OCI-LY7 (cell line): ENCODE measurements at regions of chr12 and their contacts with region 1.

Region 1: GRCh38 chr12:55817346-55818139 is at the starts of genes ORMDL2 and SARNP:
- DNase-seq: peak; percentile 100
- H3K4me3 ChIP-seq: peak within 1 kb of the TSS; percentile 97
- H3K27ac ChIP-seq: peak within 1 kb of the TSS; percentile 55
- H3K4me1 ChIP-seq: peaks cover 32% of the 10 kb centered on the region
- CTCF ChIP-seq: no peak
- total RNA-seq, gene ORMDL2: 13.4 and 20.0 TPM in 2 replicates
- total RNA-seq, gene SARNP: 86.1 and 161 TPM in 2 replicates

Region 2: DNA sequence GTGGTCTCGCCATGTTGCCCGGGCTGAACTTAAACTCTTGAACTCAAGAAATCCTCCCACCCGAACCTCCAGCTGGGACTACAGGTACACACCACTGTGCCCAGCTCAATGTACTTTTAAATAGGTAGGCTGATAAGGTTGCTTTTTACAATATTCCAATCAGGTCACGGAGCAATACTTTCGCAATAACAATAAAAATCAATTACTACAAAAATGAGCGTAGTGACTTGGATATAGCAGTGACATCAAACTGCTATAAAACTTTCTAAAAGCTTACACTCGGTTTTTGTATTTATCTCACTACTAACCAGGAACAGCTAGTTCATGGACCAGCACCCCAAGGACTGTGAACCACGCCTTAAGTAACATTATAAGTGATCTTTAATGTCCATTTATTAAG is 10.6 kb before region 1 on chr12:
- CTCF ChIA-PET with region 1: no interaction called
- POLR2A ChIA-PET with region 1: interaction called, 14 read pairs
- intact Hi-C with region 1: no loop called
- DNase-seq: no peak
- H3K4me3 ChIP-seq: no peak overlapping the region
- H3K27ac ChIP-seq: no peak overlapping the region
- H3K4me1 ChIP-seq: no peaks in the 10 kb centered on the region
- CTCF ChIP-seq: no peak

Region 3: GRCh38 chr12:55829967-55830600 is 12.5 kb after region 1 on chr12:
- CTCF ChIA-PET with region 1: interaction called, 7 read pairs
- POLR2A ChIA-PET with region 1: interaction called, 41 read pairs
- intact Hi-C with region 1: no loop called
- DNase-seq: peak; percentile 52
- H3K4me3 ChIP-seq: peak overlapping the region; percentile 96
- H3K27ac ChIP-seq: peak overlapping the region; percentile 67
- H3K4me1 ChIP-seq: peaks cover 34% of the 10 kb centered on the region
- CTCF ChIP-seq: no peak

Region 4: GRCh38 chr12:55931780-55932550 is 114.4 kb after region 1 on chr12:
- CTCF ChIA-PET with region 1: interaction called, 4 read pairs
- POLR2A ChIA-PET with region 1: interaction called, 18 read pairs
- intact Hi-C with region 1: no loop called
- DNase-seq: peak; percentile 48
- H3K4me3 ChIP-seq: peak overlapping the region; percentile 78
- H3K27ac ChIP-seq: peak overlapping the region; percentile 99
- H3K4me1 ChIP-seq: peaks cover 49% of the 10 kb centered on the region
- CTCF ChIP-seq: no peak

Region 5: GRCh38 chr12:55973598-55974307 is 156.2 kb after region 1 on chr12 and contains the start of gene RAB5B:
- CTCF ChIA-PET with region 1: no interaction called
- POLR2A ChIA-PET with region 1: interaction called, 7 read pairs
- intact Hi-C with region 1: loop called (anchors 2 kb)
- DNase-seq: peak; percentile 100
- H3K4me3 ChIP-seq: peak within 1 kb of the TSS; percentile 88
- H3K27ac ChIP-seq: peak within 1 kb of the TSS; percentile 57
- H3K4me1 ChIP-seq: peaks cover 25% of the 10 kb centered on the region
- CTCF ChIP-seq: no peak
- total RNA-seq, gene RAB5B: 21.6 and 21.8 TPM in 2 replicates

Region 6: GRCh38 chr12:56041552-56042429 is 224.2 kb after region 1 on chr12 and contains the start of gene RPS26:
- CTCF ChIA-PET with region 1: no interaction called
- POLR2A ChIA-PET with region 1: interaction called, 7 read pairs
- intact Hi-C with region 1: loop called (anchors 5 kb)
- DNase-seq: peak; percentile 100
- H3K4me3 ChIP-seq: peak within 1 kb of the TSS; percentile 83
- H3K27ac ChIP-seq: peak within 1 kb of the TSS; percentile 67
- H3K4me1 ChIP-seq: peaks cover 43% of the 10 kb centered on the region
- CTCF ChIP-seq: peak; percentile 77
- total RNA-seq, gene RPS26: 306 and 600 TPM in 2 replicates